Ovary (tissue), 10 donors: ENCODE measurements at regions of chr1 and their contacts with region 1.

Region 1: GRCh38 chr1:46724991-46725735 is 6.2 kb upstream of the EFCAB14 start:
- DNase-seq: peak; percentile 60 to 73 (median 68)
- H3K4me3 ChIP-seq: no peak overlapping the region
- H3K27ac ChIP-seq: no peak overlapping the region
- H3K4me1 ChIP-seq: no peaks in the 10 kb centered on the region
- H3K27me3 ChIP-seq: no peaks in the 10 kb centered on the region
- CTCF ChIP-seq: peak in 2 of 3 donors; percentile 63 to 71
- EP300 ChIP-seq: no peak
- POLR2A ChIP-seq: no peak

Region 2: DNA sequence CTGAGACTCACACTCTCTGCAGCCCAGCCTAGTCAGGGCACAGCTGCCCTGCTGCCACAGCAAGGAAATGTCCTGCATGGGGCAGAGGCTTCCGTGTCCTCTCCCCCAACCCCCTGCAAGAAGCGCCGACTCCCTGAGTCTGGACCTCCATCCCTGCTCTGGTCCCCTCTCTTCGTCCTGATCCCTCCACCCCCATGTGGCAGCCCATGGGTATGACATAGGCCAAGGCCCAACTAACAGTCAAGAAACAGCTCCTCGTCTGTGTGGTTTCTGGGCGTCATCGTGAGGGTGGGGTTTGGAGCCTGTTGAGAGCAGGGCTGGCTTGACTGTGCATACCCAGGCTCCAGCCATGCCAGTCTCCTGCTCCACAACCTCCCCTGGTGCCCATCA is 311.6 kb before region 1 on chr1:
- intact Hi-C with region 1: loop called in 1 of 4 experiments (anchors 10 kb)
- DNase-seq: no peak
- H3K4me3 ChIP-seq: no peak overlapping the region
- H3K27ac ChIP-seq: no peak overlapping the region
- H3K4me1 ChIP-seq: no peaks in the 10 kb centered on the region
- H3K27me3 ChIP-seq: no peaks in the 10 kb centered on the region
- CTCF ChIP-seq: no peak
- EP300 ChIP-seq: no peak
- POLR2A ChIP-seq: no peak

Region 3: GRCh38 chr1:46477153-46477929 is 247.8 kb before region 1 on chr1:
- intact Hi-C with region 1: loop called in 1 of 4 experiments (anchors 2 kb)
- DNase-seq: peak; percentile 36 to 82 (median 60)
- H3K4me3 ChIP-seq: no peak overlapping the region
- H3K27ac ChIP-seq: no peak overlapping the region
- H3K4me1 ChIP-seq: no peaks in the 10 kb centered on the region
- H3K27me3 ChIP-seq: no peaks in the 10 kb centered on the region
- CTCF ChIP-seq: peak; percentile 45 to 49 (median 48)
- EP300 ChIP-seq: no peak
- POLR2A ChIP-seq: no peak

Region 4: DNA sequence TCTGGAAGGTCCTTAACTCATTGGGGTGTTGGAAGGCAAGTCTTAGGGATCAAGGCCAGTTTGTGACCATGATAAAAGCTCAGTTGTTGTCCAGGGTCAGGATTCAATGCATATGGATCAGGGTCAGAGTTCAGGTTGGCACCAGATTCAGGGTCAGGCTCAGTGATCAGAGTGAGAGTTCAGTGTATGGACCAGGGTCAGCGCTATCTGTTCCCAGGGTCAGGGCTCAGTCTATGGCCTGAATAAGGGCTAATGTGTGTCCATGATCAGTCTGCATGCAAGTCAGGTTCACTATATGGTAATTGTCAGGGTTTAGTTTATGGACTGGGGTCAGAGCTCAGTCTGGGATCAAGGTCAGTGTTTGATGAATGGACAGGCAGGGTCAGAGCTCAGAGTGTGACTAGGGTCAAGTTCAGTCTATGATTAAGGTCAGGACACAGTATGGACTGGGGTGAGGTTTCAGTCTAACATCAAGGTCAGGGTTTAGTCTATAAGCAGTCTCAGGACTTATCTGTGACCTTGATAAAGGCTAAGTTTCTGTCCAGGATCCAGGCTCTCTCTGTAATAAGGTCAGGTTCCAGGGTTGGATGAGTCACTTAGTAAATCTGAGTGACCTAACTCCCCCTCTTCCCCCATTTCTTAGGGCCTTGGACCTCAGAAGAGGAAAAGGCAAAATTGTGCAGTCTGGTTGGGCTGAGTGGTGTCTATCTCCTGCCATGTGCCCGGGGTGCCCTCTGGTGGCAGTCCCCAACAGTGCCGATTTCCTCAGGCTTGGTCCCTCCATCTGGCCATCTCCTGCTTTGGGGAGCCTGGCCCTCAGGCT is 197.5 kb before region 1 on chr1:
- intact Hi-C with region 1: loop called (anchors 5 to 10 kb)
- DNase-seq: peak; percentile 52 to 83 (median 64)
- H3K4me3 ChIP-seq: no peak overlapping the region
- H3K27ac ChIP-seq: no peak overlapping the region
- H3K4me1 ChIP-seq: no peaks in the 10 kb centered on the region
- H3K27me3 ChIP-seq: no peaks in the 10 kb centered on the region
- CTCF ChIP-seq: peak in 2 of 3 donors; percentile 39 to 54
- EP300 ChIP-seq: no peak
- POLR2A ChIP-seq: no peak

Region 5: DNA sequence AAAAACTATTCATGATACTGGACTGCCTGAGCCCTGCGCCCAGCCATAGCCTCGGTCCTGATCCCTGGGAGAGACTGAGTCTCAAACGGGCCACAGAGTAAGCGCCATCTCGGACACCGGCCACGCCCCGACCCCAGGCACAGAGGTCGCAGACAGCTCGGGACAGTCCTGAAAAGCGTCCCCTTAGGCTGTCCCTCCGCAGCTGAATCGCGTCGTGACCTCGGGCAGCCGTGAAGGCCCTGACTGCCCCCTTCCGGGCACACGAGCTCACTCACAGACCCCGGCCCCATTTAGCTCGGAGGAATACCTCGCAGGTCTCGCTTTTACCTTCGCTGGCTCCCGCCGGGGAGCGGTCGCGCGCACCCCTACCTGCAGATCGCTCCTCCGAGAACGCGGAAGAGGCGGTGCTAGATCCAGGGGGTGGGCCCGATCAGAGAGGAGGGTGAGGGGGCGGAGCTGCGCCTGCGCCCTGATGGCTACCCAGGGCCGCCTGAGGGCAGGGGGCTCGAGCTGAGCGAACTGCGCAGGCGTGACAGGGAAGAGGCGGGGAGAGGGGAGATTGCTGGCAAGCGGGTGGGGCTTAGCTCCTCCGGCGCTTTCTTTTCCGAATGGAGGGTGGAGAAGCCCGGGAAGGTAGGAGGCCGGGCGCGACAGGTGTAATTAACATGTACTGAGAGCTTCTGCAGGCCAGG is 121.2 kb before region 1 on chr1 and contains the start of gene MKNK1:
- intact Hi-C with region 1: no loop called
- DNase-seq: peak; percentile 97 to 99 (median 98)
- H3K4me3 ChIP-seq: peak within 1 kb of the TSS; percentile 86
- H3K27ac ChIP-seq: peak within 1 kb of the TSS in 1 of 2 donors; percentile 69
- H3K4me1 ChIP-seq: peaks cover 6% of the 10 kb centered on the region
- H3K27me3 ChIP-seq: no peaks in the 10 kb centered on the region
- CTCF ChIP-seq: no peak
- EP300 ChIP-seq: no peak
- POLR2A ChIP-seq: peak; percentile 77
- total RNA-seq, gene MKNK1: 21.0 to 39.3 (median 24.9) TPM

Region 6: GRCh38 chr1:46616277-46617107 is 108.7 kb before region 1 on chr1 and contains the start of gene MOB3C:
- intact Hi-C with region 1: loop called in 1 of 4 experiments (anchors 5 kb)
- DNase-seq: peak; percentile 84 to 88 (median 85)
- H3K4me3 ChIP-seq: peak within 1 kb of the TSS; percentile 79
- H3K27ac ChIP-seq: peak within 1 kb of the TSS; percentile 65 to 95
- H3K4me1 ChIP-seq: peaks cover 7% of the 10 kb centered on the region
- H3K27me3 ChIP-seq: no peaks in the 10 kb centered on the region
- CTCF ChIP-seq: no peak
- EP300 ChIP-seq: no peak
- POLR2A ChIP-seq: peak; percentile 70
- total RNA-seq, gene MOB3C: 10.1 to 25.3 (median 19.3) TPM

Region 7: DNA sequence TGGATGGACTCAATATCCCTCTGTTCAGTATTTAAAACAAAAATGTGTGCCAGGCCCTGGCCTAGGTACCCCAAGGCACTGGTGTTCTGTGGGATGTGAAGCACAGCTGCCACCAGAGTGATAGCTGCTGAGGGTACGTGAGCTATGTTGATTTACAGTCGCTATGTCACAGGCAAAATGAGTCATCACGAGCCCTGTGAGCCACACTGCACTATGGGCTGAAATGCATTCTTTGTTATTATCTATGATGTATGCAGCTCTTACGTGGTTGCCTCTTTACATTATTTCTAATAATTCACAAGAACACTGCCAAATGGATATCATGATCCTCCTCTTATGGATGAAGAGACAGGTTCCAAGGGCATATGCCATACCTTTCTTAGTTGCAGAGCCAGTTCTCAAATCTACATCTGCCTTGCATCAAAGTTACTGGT is 51.4 kb before region 1 on chr1:
- intact Hi-C with region 1: loop called in 1 of 4 experiments (anchors 5 kb)
- DNase-seq: no peak
- H3K4me3 ChIP-seq: no peak overlapping the region
- H3K27ac ChIP-seq: no peak overlapping the region
- H3K4me1 ChIP-seq: no peaks in the 10 kb centered on the region
- H3K27me3 ChIP-seq: no peaks in the 10 kb centered on the region
- CTCF ChIP-seq: no peak
- EP300 ChIP-seq: no peak
- POLR2A ChIP-seq: no peak